ENCODE measurements at regions of chr3 and their contacts with region 1.

Region 1: DNA sequence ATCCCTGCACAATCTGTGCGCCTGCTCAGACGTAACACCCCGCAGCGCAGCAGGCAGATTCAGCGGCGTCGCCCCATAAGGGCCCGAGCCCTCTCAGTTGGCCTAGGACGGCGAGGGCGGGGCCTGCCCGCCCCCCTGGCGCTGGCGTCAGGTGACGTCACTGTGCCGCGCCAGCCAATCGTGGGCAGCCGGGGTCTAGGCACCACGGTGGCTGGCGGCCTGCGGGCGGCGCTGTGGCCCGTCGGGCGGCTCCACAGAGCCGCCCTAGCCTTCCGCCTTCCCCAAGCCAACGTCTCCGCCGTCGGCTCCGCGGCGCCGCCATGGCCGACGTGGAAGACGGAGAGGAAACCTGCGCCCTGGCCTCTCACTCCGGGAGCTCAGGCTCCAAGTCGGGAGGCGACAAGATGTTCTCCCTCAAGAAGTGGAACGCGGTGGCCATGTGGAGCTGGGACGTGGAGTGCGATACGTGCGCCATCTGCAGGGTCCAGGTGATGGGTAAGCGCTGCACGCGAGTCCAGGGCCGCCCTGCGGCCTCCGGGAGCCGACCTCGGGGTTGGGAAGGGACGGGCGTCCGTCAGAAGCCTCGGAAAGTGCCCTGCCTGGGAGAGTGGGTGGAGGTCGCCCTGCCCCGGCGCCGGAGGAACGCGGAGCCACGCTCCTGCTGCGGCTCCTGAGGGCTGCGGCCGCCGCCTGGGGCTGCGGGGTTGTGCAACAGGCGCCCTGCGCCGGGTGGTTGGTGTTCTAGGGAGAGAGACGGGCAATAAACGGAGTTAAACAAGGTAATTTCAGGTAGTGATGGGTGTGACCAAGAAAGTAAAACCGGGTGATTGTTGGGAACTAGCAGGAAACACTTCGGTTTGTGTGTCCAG is at the start of gene RNF7:
- DNase-seq: peak; percentile 92
- H3K4me3 ChIP-seq: peak within 1 kb of the TSS; percentile 69 to 75
- H3K27ac ChIP-seq: peak within 1 kb of the TSS; percentile 91 to 96
- H3K4me1 ChIP-seq: no peaks in the 10 kb centered on the region
- H3K27me3 ChIP-seq: no peaks in the 10 kb centered on the region
- CTCF ChIP-seq: peak; percentile 94 to 99 (median 96)
- POLR2A ChIP-seq: peak; percentile 72
- total RNA-seq, gene RNF7: 68.5 to 92.4 TPM

Region 2: GRCh38 chr3:141487521-141488252 is 250.6 kb before region 1 on chr3:
- intact Hi-C with region 1: loop called (anchors 2 kb)
- DNase-seq: peak; percentile 81
- H3K4me3 ChIP-seq: peak overlapping the region; percentile 96 to 98
- H3K27ac ChIP-seq: peak overlapping the region; percentile 96
- H3K4me1 ChIP-seq: no peaks in the 10 kb centered on the region
- H3K27me3 ChIP-seq: no peaks in the 10 kb centered on the region
- CTCF ChIP-seq: peak in 1 of 4 experiments; percentile 21
- POLR2A ChIP-seq: peak; percentile 73

Region 3: GRCh38 chr3:141575879-141576743 is 162.1 kb before region 1 on chr3:
- intact Hi-C with region 1: loop called (anchors 2 kb)
- DNase-seq: no peak
- H3K4me3 ChIP-seq: no peak overlapping the region
- H3K27ac ChIP-seq: no peak overlapping the region
- H3K4me1 ChIP-seq: no peaks in the 10 kb centered on the region
- H3K27me3 ChIP-seq: no peaks in the 10 kb centered on the region
- CTCF ChIP-seq: peak in 3 of 4 experiments; percentile 37 to 71 (median 60)
- POLR2A ChIP-seq: no peak

Region 4: GRCh38 chr3:141659821-141660613 is 78.2 kb before region 1 on chr3:
- intact Hi-C with region 1: loop called (anchors 5 kb)
- DNase-seq: peak; percentile 46
- H3K4me3 ChIP-seq: peak overlapping the region; percentile 37 to 39
- H3K27ac ChIP-seq: peak overlapping the region; percentile 28 to 45
- H3K4me1 ChIP-seq: no peaks in the 10 kb centered on the region
- H3K27me3 ChIP-seq: no peaks in the 10 kb centered on the region
- CTCF ChIP-seq: no peak
- POLR2A ChIP-seq: no peak

Region 5: DNA sequence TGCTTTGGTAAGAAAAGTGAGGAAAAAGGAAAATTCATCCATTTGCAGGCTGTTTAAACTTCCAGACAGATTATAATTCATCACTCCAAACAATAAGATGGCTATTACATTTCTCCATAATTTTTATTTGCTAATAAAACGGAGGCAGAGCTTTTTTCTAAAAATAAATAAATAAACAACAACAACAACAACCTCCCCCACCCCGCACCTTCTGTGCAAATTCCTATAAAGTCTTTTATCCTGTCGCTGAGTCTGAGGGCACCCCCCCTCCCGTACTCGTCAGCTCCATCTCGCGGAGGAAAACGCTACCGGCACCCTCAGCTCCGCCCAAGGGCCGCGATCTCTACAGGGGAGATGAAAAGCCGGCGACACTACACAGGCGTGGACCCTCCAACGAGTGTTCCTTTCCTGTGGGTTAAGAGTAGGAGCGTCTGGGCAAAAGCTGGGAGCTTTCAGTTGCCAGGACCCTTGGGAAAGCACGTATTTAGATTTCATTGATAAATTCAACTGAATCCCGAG is 137.2 kb after region 1 on chr3:
- intact Hi-C with region 1: loop called (anchors 1 kb)
- DNase-seq: peak; percentile 91
- H3K4me3 ChIP-seq: peak overlapping the region; percentile 95 to 96
- H3K27ac ChIP-seq: peak overlapping the region; percentile 97 to 99
- H3K4me1 ChIP-seq: peaks cover 11% of the 10 kb centered on the region
- H3K27me3 ChIP-seq: no peaks in the 10 kb centered on the region
- CTCF ChIP-seq: peak; percentile 71 to 90 (median 81)
- POLR2A ChIP-seq: no peak

Measured in prostate gland (tissue), 2 donors.